Head of caudate nucleus (tissue), 42 donors: ENCODE measurements at regions of chr4 and their contacts with region 1.

Region 1: GRCh38 chr4:6197433-6198174 is 2.7 kb downstream of the JAKMIP1 start:
- DNase-seq: peak in 1 of 42 donors; percentile 23

Region 2: DNA sequence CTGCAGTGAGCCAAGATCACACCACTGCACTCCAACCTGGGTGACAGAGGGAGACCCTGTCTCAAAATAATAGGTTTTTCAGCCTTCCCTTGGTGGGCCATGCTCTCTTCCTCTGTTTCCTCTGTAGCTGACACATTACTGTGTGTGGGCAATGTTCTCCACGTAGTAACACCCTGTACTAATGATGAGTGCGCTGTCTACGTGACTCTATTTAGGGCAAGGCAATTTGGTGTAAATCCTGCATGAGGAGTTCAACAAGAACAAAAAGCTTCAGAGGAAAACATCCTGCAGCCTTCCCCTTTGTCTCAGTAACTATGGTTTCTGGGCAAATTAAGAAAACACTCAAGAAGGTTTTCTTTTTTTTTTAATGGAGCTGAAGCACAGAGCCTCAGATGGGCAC is 27.1 kb after region 1 on chr4:
- intact Hi-C with region 1: loop called (anchors 1 kb)
- DNase-seq: peak in 23 of 42 donors; percentile 30 to 86 (median 64)

Region 3: GRCh38 chr4:6332042-6332668 is 134.6 kb after region 1 on chr4:
- intact Hi-C with region 1: no loop called
- DNase-seq: peak in 20 of 42 donors; percentile 38 to 77 (median 53)